Sigmoid colon (tissue), 7 donors: ENCODE measurements at regions of chr17 and their contacts with region 1.

Region 1: GRCh38 chr17:40362696-40363110 is 1.8 kb downstream of the GJD3 start:
- DNase-seq: peak; percentile 79
- H3K4me3 ChIP-seq: peak overlapping the region; percentile 31 to 61 (median 52)
- H3K27ac ChIP-seq: peak overlapping the region in 1 of 4 donors; percentile 31
- H3K4me1 ChIP-seq: peaks cover 0 to 31% (median 16%) of the 10 kb centered on the region in 4 donors
- H3K27me3 ChIP-seq: peaks cover 0 to 5% (median 0%) of the 10 kb centered on the region in 3 donors
- CTCF ChIP-seq: peak in 2 of 4 experiments; percentile 33 to 47
- EP300 ChIP-seq: no peak
- POLR2A ChIP-seq: no peak

Region 2: GRCh38 chr17:39996800-39997199 is 365.9 kb before region 1 on chr17:
- intact Hi-C with region 1: no loop called
- DNase-seq: peak; percentile 79
- H3K4me3 ChIP-seq: no peak overlapping the region
- H3K27ac ChIP-seq: peak overlapping the region in 1 of 4 donors; percentile 4
- H3K4me1 ChIP-seq: no peaks in the 10 kb centered on the region
- H3K27me3 ChIP-seq: no peaks in the 10 kb centered on the region
- CTCF ChIP-seq: no peak
- EP300 ChIP-seq: no peak
- POLR2A ChIP-seq: no peak

Region 3: GRCh38 chr17:40190197-40191021 is 172.3 kb before region 1 on chr17:
- intact Hi-C with region 1: no loop called
- DNase-seq: no peak
- H3K4me3 ChIP-seq: peak overlapping the region in 3 of 4 donors; percentile 54 to 71 (median 60)
- H3K27ac ChIP-seq: peak overlapping the region in 2 of 4 donors; percentile 73 to 82
- H3K4me1 ChIP-seq: peaks cover 0 to 19% (median 15%) of the 10 kb centered on the region in 4 donors
- H3K27me3 ChIP-seq: no peaks in the 10 kb centered on the region
- CTCF ChIP-seq: peak in 2 of 4 experiments; percentile 18 to 19
- EP300 ChIP-seq: no peak
- POLR2A ChIP-seq: no peak

Region 4: GRCh38 chr17:40399185-40399584 is 36.5 kb after region 1 on chr17:
- intact Hi-C with region 1: loop called (anchors 5 kb)
- DNase-seq: no peak
- H3K4me3 ChIP-seq: no peak overlapping the region
- H3K27ac ChIP-seq: no peak overlapping the region
- H3K4me1 ChIP-seq: no peaks in the 10 kb centered on the region
- H3K27me3 ChIP-seq: no peaks in the 10 kb centered on the region
- CTCF ChIP-seq: peak; percentile 44 to 60 (median 52)
- EP300 ChIP-seq: no peak
- POLR2A ChIP-seq: no peak

Region 5: GRCh38 chr17:40417609-40418427 is 55.1 kb after region 1 on chr17 and contains the start of gene TOP2A:
- intact Hi-C with region 1: loop called (anchors 2 kb)
- DNase-seq: peak; percentile 99
- H3K4me3 ChIP-seq: peak within 1 kb of the TSS; percentile 36 to 59 (median 56)
- H3K27ac ChIP-seq: peak within 1 kb of the TSS; percentile 77 to 88 (median 80)
- H3K4me1 ChIP-seq: peaks cover 0 to 17% (median 10%) of the 10 kb centered on the region in 4 donors
- H3K27me3 ChIP-seq: no peaks in the 10 kb centered on the region
- CTCF ChIP-seq: no peak
- EP300 ChIP-seq: no peak
- POLR2A ChIP-seq: no peak
- total RNA-seq, gene TOP2A: 0.33 to 2.3 (median 1.8) TPM

Region 6: DNA sequence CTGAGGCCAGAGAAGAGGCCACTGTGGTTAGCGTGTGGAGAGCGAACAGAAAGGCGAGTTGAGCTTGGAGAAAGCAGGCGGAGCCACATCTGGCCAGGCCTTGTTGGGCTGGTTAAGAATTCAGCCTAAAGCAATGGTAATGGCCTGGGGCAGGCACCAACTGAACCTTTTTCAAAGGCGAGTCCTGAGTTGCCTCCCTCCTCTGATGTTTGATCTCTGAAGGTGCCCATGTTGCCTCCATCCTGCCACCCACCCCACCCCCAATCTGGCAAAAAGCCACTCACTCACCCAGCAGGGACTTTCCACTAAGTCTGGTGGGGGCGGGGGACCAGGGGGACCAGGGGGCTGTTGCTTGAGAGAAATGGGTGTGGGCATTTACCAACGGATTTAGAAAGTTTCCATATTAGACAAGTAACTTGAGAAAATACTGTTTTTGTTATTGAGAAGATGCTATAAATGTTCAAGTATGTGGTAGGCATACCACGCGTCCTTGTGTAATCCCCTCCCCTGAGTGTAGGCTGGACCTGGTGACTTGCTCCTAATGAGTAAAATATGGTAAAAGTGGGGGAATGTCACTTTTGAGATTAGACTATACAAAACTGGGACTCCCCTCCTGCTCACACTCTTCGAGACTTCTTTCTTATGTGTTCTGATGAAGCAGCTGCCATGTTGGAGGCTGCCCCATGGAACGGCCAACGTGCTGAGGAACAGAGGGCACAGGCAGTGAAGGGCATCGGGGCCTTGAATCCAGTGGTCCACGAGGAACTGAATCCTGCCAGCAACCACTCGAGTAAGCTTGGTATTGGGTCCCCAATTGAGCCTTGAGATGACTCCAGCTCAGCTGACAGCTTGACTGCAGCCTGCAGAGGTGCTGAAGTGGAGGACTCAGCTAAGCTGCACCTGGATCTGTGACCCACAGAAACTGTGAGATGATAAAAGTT is 168.6 kb after region 1 on chr17:
- intact Hi-C with region 1: loop called (anchors 2 kb)
- DNase-seq: peak; percentile 44
- H3K4me3 ChIP-seq: no peak overlapping the region
- H3K27ac ChIP-seq: no peak overlapping the region
- H3K4me1 ChIP-seq: peaks cover 0 to 31% (median 29%) of the 10 kb centered on the region in 4 donors
- H3K27me3 ChIP-seq: no peaks in the 10 kb centered on the region
- CTCF ChIP-seq: no peak
- EP300 ChIP-seq: no peak
- POLR2A ChIP-seq: no peak

Region 7: DNA sequence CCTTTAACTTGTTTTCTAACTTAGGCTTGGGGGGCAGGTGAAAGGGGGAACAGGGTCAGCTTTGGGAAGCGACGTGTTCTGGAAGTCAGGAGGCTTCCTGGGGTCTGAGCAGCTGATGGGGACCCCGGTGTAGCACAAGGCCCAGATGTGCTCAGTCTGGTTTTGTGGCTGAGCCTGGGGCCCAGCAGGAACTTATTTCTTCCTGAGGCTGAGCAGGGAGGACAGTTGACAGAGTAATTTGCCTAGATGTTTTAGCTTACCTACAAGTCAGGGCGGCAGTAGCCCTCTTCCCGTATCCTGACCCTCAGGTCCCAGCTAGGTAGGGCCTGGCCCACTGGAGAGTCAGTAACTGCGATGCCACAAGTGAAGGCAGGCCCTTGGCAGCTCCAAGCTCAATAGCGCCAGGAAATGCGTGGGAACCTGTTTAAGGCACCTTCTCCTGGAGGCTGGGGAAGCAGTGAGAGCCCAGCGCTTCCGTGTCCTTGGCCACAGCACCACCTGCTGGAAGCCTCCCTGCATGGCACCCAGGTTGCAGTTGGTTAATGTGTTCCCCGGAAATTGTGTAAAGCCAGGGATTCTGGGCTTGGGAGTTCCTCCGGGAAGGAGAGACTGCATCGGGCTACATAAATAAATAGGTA is 197.4 kb after region 1 on chr17:
- intact Hi-C with region 1: loop called (anchors 1 kb)
- DNase-seq: peak; percentile 96
- H3K4me3 ChIP-seq: no peak overlapping the region
- H3K27ac ChIP-seq: peak overlapping the region; percentile 20 to 71 (median 52)
- H3K4me1 ChIP-seq: peaks cover 0 to 44% (median 35%) of the 10 kb centered on the region in 4 donors
- H3K27me3 ChIP-seq: no peaks in the 10 kb centered on the region
- CTCF ChIP-seq: peak; percentile 96 to 99 (median 98)
- EP300 ChIP-seq: no peak
- POLR2A ChIP-seq: no peak

Region 8: GRCh38 chr17:42132941-42133340 is 1770.2 kb after region 1 on chr17:
- intact Hi-C with region 1: no loop called
- DNase-seq: no peak
- H3K4me3 ChIP-seq: no peak overlapping the region
- H3K27ac ChIP-seq: peak overlapping the region; percentile 30 to 66 (median 44)
- H3K4me1 ChIP-seq: peaks cover 0 to 57% (median 36%) of the 10 kb centered on the region in 4 donors
- H3K27me3 ChIP-seq: no peaks in the 10 kb centered on the region
- CTCF ChIP-seq: no peak
- EP300 ChIP-seq: no peak
- POLR2A ChIP-seq: no peak